ENCODE measurements at regions of chr4 and their contacts with region 1.

Region 1: DNA sequence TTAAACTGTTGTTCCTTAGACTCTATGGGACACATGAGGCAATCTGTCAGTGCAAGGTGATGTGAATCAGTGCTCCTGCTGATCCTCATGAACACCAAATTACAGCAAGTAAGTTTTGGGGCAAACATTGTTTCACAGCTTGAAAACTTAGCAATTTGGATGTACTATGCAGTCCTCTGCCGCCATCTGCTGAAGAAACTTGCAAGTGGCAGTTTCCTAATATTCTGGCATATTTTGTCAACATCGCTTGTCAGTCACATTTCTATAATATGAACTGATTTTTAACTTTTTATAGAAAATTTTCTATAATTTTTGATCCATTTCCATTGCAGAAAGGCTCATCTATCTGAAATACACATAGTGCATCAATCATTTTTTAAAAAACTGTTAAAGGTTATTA is 56.3 kb downstream of the ZAR1 start:
- DNase-seq: peak; percentile 57
- ATAC-seq: peak; percentile 23
- H3K4me3 Mint-ChIP-seq: no peak overlapping the region
- H3K27ac Mint-ChIP-seq: no peak overlapping the region
- H3K4me1 Mint-ChIP-seq: no peaks in the 10 kb centered on the region
- H3K27me3 Mint-ChIP-seq: no peaks in the 10 kb centered on the region

Region 2: GRCh38 chr4:48445704-48446103 is 100.6 kb before region 1 on chr4:
- CTCF ChIA-PET with region 1: no interaction called
- POLR2A ChIA-PET with region 1: no interaction called
- intact Hi-C with region 1: loop called (anchors 1 to 5 kb)
- DNase-seq: no peak
- ATAC-seq: no peak
- H3K4me3 Mint-ChIP-seq: no peak overlapping the region
- H3K27ac Mint-ChIP-seq: no peak overlapping the region
- H3K4me1 Mint-ChIP-seq: no peaks in the 10 kb centered on the region
- H3K27me3 Mint-ChIP-seq: no peaks in the 10 kb centered on the region